Activated CD4-positive, alpha-beta T cell treated with anti-CD3 and anti-CD28 coated beads, Interleukin-2, amount 10 ng/mL, durations not matched to agents 24 days and 14 days (primary cell): ENCODE measurements at regions of chr3 and their contacts with region 1.

Region 1: GRCh38 chr3:31077021-31077601 is 182.7 kb upstream of the GADL1 start:
- DNase-seq: peak; percentile 79
- H3K4me3 Mint-ChIP-seq: peak overlapping the region; percentile 22
- H3K27ac Mint-ChIP-seq: peak overlapping the region; percentile 83
- H3K4me1 Mint-ChIP-seq: peaks cover 32% of the 10 kb centered on the region
- H3K27me3 Mint-ChIP-seq: no peaks in the 10 kb centered on the region

Region 2: GRCh38 chr3:30623351-30623750 is 453.8 kb before region 1 on chr3:
- intact Hi-C with region 1: loop called (anchors 1 kb)
- DNase-seq: peak; percentile 58
- H3K4me3 Mint-ChIP-seq: peak overlapping the region; percentile 77
- H3K27ac Mint-ChIP-seq: peak overlapping the region; percentile 94
- H3K4me1 Mint-ChIP-seq: peaks cover 78% of the 10 kb centered on the region
- H3K27me3 Mint-ChIP-seq: no peaks in the 10 kb centered on the region

Region 3: DNA sequence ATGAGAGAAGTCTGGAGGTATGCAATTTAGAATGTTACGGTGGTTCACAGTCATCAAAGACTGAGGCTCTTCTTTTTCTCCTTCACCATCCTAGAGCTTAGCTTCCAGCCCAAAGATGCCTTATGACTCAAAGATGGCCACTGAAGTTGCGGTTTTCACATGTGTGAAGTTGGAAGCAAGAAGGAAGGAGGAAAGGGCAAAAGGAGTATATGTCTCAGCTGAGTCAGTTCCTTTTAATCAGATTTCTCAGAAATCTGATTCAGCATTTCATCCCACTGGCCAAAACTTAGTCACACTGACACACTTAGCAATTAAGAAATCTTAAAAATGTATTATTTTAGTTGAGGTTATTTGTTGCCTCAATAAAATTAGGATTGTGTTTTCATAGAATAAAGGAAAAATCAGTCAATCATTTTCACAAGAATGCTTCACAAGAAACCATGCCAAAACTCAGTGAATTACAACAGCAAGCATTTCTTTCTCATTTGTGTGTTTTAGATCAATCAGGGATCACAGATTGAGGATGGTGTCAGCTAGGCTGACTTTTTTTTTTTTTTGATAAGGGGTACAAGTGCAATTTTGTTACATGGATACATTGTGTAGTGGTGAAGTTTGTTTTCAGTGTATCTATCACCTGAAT is 28.4 kb after region 1 on chr3:
- intact Hi-C with region 1: loop called (anchors 1 kb)
- DNase-seq: peak; percentile 66
- H3K4me3 Mint-ChIP-seq: no peak overlapping the region
- H3K27ac Mint-ChIP-seq: no peak overlapping the region
- H3K4me1 Mint-ChIP-seq: peaks cover 39% of the 10 kb centered on the region
- H3K27me3 Mint-ChIP-seq: no peaks in the 10 kb centered on the region

Region 4: GRCh38 chr3:31213869-31214486 is 136.9 kb after region 1 on chr3:
- intact Hi-C with region 1: loop called (anchors 2 kb)
- DNase-seq: peak; percentile 86
- H3K4me3 Mint-ChIP-seq: peak overlapping the region; percentile 71
- H3K27ac Mint-ChIP-seq: peak overlapping the region; percentile 75
- H3K4me1 Mint-ChIP-seq: peaks cover 71% of the 10 kb centered on the region
- H3K27me3 Mint-ChIP-seq: no peaks in the 10 kb centered on the region

Region 5: DNA sequence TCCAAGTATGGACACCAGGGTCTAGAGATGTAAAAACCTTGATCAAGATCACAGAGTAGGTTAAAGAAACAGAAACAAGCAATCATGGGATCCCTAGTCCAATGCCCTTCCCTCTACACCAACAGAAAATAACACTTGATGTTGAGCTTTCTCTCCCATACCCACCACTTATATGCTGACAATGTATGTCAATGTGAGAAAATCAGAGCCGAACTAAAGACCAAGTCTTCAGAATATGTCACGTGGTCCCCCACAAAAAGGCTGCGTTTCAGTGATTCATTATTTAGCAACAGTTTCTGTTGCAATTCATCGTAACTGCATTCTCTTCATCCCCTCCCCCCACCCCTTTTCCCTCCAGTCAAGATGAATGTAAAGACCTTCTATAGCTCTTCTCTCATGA is 176.7 kb after region 1 on chr3:
- intact Hi-C with region 1: loop called (anchors 1 kb)
- DNase-seq: no peak
- H3K4me3 Mint-ChIP-seq: peak overlapping the region; percentile 61
- H3K27ac Mint-ChIP-seq: peak overlapping the region; percentile 93
- H3K4me1 Mint-ChIP-seq: peaks cover 51% of the 10 kb centered on the region
- H3K27me3 Mint-ChIP-seq: no peaks in the 10 kb centered on the region

Region 6: DNA sequence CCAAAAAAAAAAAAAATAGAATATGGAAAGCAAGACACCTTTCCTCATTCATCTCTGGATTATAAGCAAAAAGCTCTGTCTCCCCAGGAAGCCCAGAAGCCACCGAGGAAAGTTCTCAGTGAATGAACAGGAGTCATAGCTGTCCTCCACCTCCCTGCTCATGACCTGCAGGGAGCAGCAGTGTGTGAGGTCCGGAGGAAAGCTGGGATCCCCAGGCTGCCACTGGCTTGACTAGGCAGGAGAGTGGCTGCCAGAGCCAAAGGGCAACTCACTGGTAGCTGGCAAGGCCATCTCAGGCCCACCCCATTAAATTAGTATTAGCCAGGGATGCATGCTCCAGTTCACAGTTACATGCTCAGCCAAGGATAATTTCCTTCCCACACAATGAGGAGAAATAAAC is 264.0 kb after region 1 on chr3:
- intact Hi-C with region 1: no loop called
- DNase-seq: peak; percentile 21
- H3K4me3 Mint-ChIP-seq: no peak overlapping the region
- H3K27ac Mint-ChIP-seq: no peak overlapping the region
- H3K4me1 Mint-ChIP-seq: no peaks in the 10 kb centered on the region
- H3K27me3 Mint-ChIP-seq: no peaks in the 10 kb centered on the region